ENCODE measurements at regions of chrX and their contacts with region 1.

Region 1: GRCh38 chrX:140572724-140573123 is 67.9 kb upstream of the SOX3 start:
- DNase-seq: peak in 6 of 10 donors; percentile 3 to 83 (median 24)

Region 2: DNA sequence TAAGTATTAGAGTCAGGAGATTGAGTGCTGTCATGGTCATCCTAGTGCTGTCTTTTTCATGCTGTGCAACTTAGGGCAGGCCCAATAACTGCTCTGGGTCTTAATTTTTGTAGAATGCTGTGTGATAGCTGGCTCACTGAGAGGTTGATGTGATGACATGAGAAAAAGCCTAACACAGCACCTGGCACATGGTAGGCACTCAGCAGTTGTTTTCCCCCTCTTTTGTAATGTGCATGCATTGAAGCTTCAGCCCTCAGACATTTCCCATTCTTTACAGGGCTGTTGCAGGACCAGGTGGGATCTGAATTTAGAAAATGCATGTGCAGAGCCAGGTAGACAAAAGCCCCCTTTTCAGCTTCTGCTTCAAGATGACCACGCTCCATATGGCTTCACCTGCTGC is 23.7 kb before region 1 on chrX:
- intact Hi-C with region 1: no loop called
- DNase-seq: no peak

Region 3: DNA sequence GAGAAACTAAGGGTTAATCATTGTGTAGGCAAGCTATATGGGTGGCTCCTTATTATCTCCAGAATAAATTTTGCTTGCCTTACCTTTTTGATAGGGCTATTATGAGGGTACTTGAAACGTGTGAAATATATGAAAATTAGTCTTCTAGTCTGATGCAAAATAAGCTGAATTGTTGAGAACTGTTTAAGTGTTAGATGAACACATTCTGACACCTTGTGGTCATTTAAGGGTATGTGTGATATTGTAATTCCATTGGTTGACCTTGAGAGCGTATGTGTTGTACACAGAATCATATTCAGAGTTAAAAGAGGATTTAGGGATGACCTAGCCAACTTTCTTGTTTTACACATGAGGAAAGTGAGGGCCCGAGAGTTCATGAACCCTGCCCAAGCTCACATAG is 92.2 kb after region 1 on chrX:
- intact Hi-C with region 1: loop called (anchors 5 kb)
- DNase-seq: no peak